B cell (primary cell): ENCODE measurements at regions of chr11 and their contacts with region 1.

Region 1: DNA sequence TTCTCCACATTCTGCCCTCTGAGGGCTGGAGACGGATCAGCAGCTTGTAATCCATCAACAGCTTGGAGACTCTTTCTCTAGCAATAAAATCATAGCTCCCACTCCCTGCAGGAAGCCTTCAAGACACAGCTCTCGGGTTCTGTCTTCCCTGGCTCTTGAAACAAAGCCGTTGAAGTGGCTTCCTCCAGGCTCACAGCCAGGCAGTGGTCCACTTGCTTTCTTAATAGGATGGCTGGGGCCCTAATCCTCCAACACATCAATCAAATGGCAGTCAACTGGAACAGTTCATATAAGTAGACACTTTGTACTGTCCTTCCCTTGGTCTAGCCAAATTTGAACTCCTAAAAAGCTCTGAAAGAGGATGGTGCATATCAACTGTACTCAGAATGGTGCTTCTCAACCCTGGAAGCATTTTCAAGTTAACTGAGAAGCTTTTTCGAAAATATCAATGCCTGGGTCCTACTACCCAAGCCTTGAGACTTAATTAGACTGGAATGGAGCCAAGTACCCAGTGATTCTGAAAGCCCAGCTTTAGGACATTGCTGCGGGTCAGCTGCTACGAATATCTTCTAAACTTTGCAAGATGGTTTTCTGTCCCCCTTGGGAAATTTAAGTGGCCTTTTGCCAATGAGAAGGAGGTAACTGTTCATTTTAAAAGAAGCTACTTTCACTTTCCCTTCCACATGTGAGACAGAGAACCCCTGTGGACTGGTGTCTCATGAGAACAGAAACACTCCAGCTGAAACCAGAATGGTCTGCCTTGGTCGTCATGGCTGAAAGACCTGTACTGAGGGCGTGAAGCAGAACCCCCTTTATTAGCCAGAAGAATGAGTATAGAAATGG is 74.7 kb downstream of the SC5D start:
- DNase-seq: peak; percentile 89
- ATAC-seq: peak; percentile 98
- H3K4me3 ChIP-seq: peak overlapping the region in 3 of 5 experiments; percentile 33 to 40 (median 34)
- H3K4me3 Mint-ChIP-seq: peak overlapping the region; percentile 73
- H3K27ac ChIP-seq: peak overlapping the region; percentile 40 to 52
- H3K27ac Mint-ChIP-seq: peak overlapping the region; percentile 81
- H3K4me1 ChIP-seq: peaks cover 20 to 23% of the 10 kb centered on the region in 2 donors
- H3K4me1 Mint-ChIP-seq: peaks cover 40% of the 10 kb centered on the region
- H3K27me3 ChIP-seq: no peaks in the 10 kb centered on the region
- H3K27me3 Mint-ChIP-seq: peaks cover 4% of the 10 kb centered on the region
- CTCF ChIP-seq: no peak

Region 2: DNA sequence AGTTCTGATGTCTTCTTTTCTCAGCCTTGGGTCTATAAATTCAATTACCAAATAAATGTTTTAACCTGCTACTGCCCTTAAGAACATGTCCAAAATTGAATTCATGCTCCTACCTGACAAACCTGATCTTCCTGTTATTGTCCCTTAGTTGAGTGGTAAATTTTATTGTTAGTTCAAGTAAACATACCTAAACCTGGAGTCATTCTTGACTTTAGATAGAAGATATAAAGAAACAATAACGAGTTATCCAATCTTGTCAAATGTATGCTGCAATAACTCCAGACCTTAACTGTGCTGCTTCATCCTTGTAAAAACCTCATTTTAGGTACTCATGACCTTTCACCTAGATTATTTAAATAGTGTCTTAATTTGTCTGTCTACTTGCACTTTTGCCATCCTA is 109.2 kb before region 1 on chr11:
- CTCF ChIA-PET with region 1: no interaction called
- POLR2A ChIA-PET with region 1: no interaction called
- intact Hi-C with region 1: no loop called
- DNase-seq: no peak
- ATAC-seq: no peak
- H3K4me3 ChIP-seq: no peak overlapping the region
- H3K4me3 Mint-ChIP-seq: no peak overlapping the region
- H3K27ac ChIP-seq: no peak overlapping the region
- H3K27ac Mint-ChIP-seq: no peak overlapping the region
- H3K4me1 ChIP-seq: no peaks in the 10 kb centered on the region
- H3K4me1 Mint-ChIP-seq: no peaks in the 10 kb centered on the region
- H3K27me3 ChIP-seq: peaks cover 0 to 7% (median 0%) of the 10 kb centered on the region in 4 experiments
- H3K27me3 Mint-ChIP-seq: peaks cover 7% of the 10 kb centered on the region
- CTCF ChIP-seq: no peak

Region 3: DNA sequence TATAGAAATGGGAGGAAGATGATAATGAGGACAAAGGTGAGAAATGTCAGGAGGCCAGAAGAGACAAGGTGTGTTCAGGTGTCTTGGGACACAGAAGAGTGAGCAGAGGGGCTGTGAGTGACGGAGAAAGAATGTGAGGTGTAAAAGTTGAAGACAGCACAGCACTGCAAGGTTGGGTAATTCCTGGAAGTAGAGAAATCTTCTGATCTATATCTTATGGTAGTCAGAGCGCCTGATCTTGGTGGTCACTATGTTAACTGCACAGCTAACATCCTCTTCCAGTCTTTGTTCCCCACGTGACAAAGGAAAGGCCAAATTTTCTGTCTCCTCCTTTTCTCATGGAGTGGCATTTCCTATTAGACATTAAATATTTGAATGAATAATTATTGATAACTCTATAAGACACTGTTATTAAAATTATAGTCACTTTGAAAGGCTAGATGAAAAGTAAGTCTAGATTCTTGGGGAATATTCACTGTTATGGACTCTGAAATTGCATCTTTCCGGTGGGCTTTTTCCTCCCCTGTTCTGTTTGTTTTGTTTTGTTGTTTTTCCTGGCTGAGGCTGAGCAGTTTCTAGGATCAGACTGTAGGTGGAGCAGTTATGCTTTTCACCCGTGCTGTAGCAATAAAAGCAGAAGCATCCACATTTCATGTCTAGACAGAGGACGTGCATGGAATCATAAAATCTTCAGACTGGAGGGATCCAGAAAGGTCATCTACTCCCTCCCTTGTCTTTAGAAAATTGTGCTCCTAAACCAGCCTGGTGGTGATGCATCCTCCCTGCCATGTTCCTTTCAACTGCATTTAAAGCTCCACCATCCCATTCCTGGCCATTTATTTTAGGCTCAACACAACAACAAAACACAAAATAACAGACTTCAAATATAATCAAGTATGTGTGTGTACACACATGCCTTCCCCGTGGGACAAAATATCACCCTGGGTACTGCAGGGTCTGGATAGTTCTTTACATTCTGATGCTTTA is 48.1 kb before region 1 on chr11:
- CTCF ChIA-PET with region 1: interaction called, 6 read pairs
- POLR2A ChIA-PET with region 1: no interaction called
- intact Hi-C with region 1: loop called (anchors 2 kb)
- DNase-seq: peak; percentile 77
- ATAC-seq: peak; percentile 74
- H3K4me3 ChIP-seq: no peak overlapping the region
- H3K4me3 Mint-ChIP-seq: no peak overlapping the region
- H3K27ac ChIP-seq: no peak overlapping the region
- H3K27ac Mint-ChIP-seq: no peak overlapping the region
- H3K4me1 ChIP-seq: peaks cover 11% of the 10 kb centered on the region in 2 donors
- H3K4me1 Mint-ChIP-seq: peaks cover 17% of the 10 kb centered on the region
- H3K27me3 ChIP-seq: no peaks in the 10 kb centered on the region
- H3K27me3 Mint-ChIP-seq: peaks cover 6% of the 10 kb centered on the region
- CTCF ChIP-seq: peak; percentile 76

Region 4: GRCh38 chr11:121347813-121348212 is 19.4 kb before region 1 on chr11:
- CTCF ChIA-PET with region 1: no interaction called
- POLR2A ChIA-PET with region 1: no interaction called
- intact Hi-C with region 1: no loop called
- DNase-seq: no peak
- ATAC-seq: no peak
- H3K4me3 ChIP-seq: no peak overlapping the region
- H3K4me3 Mint-ChIP-seq: no peak overlapping the region
- H3K27ac ChIP-seq: no peak overlapping the region
- H3K27ac Mint-ChIP-seq: no peak overlapping the region
- H3K4me1 ChIP-seq: peaks cover 0 to 2% of the 10 kb centered on the region in 2 donors
- H3K4me1 Mint-ChIP-seq: peaks cover 2% of the 10 kb centered on the region
- H3K27me3 ChIP-seq: peaks cover 0 to 3% (median 0%) of the 10 kb centered on the region in 4 experiments
- H3K27me3 Mint-ChIP-seq: no peaks in the 10 kb centered on the region
- CTCF ChIP-seq: no peak

Region 5: DNA sequence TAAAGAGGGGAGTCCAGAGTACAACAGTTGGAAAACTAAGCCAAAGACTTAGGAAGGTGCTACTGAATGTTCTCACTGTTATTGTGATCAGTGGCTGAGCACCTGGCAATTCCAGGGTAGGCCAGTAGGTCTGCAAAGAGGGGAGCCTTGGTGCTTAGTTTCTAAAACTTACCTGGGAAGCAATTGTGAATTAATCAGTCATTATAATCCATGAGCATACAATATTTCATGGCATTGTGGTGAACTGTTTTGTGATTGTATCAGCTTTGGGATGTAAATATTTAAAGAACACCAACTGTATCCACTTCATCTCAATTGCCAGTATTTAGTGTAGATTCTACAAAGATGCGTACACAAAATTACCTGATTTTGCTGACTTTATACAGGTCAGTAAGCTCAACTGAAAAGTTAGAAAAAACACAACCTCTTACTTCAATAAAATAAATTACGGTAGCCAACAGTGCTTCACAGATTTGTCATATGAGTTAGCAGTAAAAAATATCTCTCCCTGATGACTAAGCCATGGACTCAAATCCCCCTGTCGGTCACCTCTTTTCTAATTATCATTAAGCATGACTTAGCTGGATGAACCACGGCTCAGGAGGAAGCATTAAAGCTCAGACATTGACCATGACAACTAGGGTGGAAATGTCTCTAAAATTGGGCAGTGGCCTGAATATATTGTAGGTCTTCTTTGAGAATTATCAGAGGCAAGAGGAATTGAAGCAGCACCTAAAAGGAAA is 54.1 kb after region 1 on chr11:
- CTCF ChIA-PET with region 1: no interaction called
- POLR2A ChIA-PET with region 1: interaction called, 6 read pairs
- intact Hi-C with region 1: loop called (anchors 2 kb)
- DNase-seq: no peak
- ATAC-seq: no peak
- H3K4me3 ChIP-seq: no peak overlapping the region
- H3K4me3 Mint-ChIP-seq: peak overlapping the region; percentile 24
- H3K27ac ChIP-seq: peak overlapping the region in 1 of 2 donors; percentile 67
- H3K27ac Mint-ChIP-seq: peak overlapping the region; percentile 0
- H3K4me1 ChIP-seq: peaks cover 49 to 50% of the 10 kb centered on the region in 2 donors
- H3K4me1 Mint-ChIP-seq: peaks cover 74% of the 10 kb centered on the region
- H3K27me3 ChIP-seq: no peaks in the 10 kb centered on the region
- H3K27me3 Mint-ChIP-seq: no peaks in the 10 kb centered on the region
- CTCF ChIP-seq: no peak